Cardiac septum (tissue), 1 donor: ENCODE measurements at regions of chr6 and their contacts with region 1.

Region 1: GRCh38 chr6:43454696-43455530 is 435 bp downstream of the DLK2 start:
- DNase-seq: peak; percentile 95

Region 2: DNA sequence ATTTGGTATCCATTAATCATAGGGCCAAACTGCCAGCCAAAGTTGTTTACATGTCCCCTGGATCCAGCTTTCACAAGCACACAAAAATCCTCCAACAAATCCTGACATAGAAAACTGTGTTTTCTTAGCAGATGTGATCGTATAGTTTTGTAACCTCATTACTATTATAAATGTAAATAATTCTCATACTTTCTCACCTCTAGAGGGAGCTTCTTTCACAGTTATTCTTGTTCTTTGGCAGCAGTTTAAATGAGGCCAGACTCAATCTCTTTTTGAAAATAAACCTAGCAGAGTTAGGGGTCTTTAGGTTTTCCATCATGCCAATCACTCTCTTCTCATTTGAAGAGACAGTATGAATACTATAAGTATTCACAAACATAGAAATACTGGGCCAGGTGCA is 68.4 kb before region 1 on chr6:
- intact Hi-C with region 1: loop called (anchors 10 kb)
- DNase-seq: no peak

Region 3: GRCh38 chr6:43496370-43497128 is 41.6 kb after region 1 on chr6:
- intact Hi-C with region 1: loop called (anchors 2 kb)
- DNase-seq: no peak

Region 4: GRCh38 chr6:43506667-43507471 is 52.0 kb after region 1 on chr6:
- intact Hi-C with region 1: loop called (anchors 2 kb)
- DNase-seq: peak; percentile 89